Calu3 (cell line): ENCODE measurements at regions of chr10 and their contacts with region 1.

Region 1: GRCh38 chr10:3902054-3902808 is 117.2 kb upstream of the KLF6 start:
- DNase-seq: peak; percentile 23
- H3K4me3 Mint-ChIP-seq: no peak overlapping the region
- H3K27ac Mint-ChIP-seq: peak overlapping the region; percentile 43
- H3K4me1 Mint-ChIP-seq: peaks cover 48% of the 10 kb centered on the region
- H3K27me3 Mint-ChIP-seq: no peaks in the 10 kb centered on the region
- CTCF ChIP-seq: no peak

Region 2: GRCh38 chr10:3805791-3806461 is 96.3 kb before region 1 on chr10:
- CTCF ChIA-PET with region 1: no interaction called
- intact Hi-C with region 1: loop called (anchors 5 kb)
- DNase-seq: peak; percentile 57
- H3K4me3 Mint-ChIP-seq: peak overlapping the region; percentile 48
- H3K27ac Mint-ChIP-seq: peak overlapping the region; percentile 85
- H3K4me1 Mint-ChIP-seq: peaks cover 54% of the 10 kb centered on the region
- H3K27me3 Mint-ChIP-seq: no peaks in the 10 kb centered on the region
- CTCF ChIP-seq: no peak

Region 3: GRCh38 chr10:3950676-3951275 is 48.5 kb after region 1 on chr10:
- CTCF ChIA-PET with region 1: no interaction called
- intact Hi-C with region 1: loop called (anchors 5 kb)
- DNase-seq: no peak
- H3K4me3 Mint-ChIP-seq: no peak overlapping the region
- H3K27ac Mint-ChIP-seq: no peak overlapping the region
- H3K4me1 Mint-ChIP-seq: peaks cover 17% of the 10 kb centered on the region
- H3K27me3 Mint-ChIP-seq: no peaks in the 10 kb centered on the region
- CTCF ChIP-seq: no peak